Heart left ventricle (tissue), 16 donors: ENCODE measurements at regions of chr10 and their contacts with region 1.

Region 1: DNA sequence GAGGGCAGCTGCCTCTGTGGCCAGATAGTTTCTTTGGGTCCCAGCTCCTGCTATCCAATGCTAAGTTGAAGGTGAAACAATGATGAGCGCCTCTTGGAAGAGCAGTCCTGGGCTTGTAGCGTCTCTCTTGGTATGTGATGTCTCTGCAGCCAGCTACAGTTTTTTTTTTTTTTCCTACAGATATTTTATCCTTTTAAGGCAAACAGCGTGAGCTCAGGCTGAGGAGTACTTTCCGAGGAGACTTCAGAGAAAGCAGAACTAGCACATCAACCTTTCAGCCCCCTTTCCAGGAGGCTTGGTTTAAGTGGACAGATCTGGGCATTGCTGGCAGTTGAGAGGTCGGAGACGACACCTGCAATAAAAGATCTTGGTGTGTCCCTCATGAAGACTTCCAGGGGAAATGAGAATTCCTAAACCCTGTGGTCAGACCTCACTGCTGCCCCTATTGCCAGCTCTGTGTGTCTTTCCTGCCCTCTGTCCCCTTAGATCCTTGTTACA is 9.1 kb downstream of the PRKG1 start:
- DNase-seq: no peak
- ATAC-seq: peak in 2 of 4 donors; percentile 28 to 30
- H3K4me3 ChIP-seq: no peak overlapping the region
- H3K27ac ChIP-seq: peak overlapping the region in 6 of 12 donors; percentile 9 to 52 (median 31)
- H3K4me1 ChIP-seq: peaks cover 0 to 38% (median 6%) of the 10 kb centered on the region in 12 donors
- H3K27me3 ChIP-seq: no peaks in the 10 kb centered on the region
- CTCF ChIP-seq: peak in 1 of 12 donors; percentile 12
- POLR2A ChIP-seq: no peak

Region 2: GRCh38 chr10:50846753-50847152 is 236.7 kb before region 1 on chr10:
- intact Hi-C with region 1: no loop called
- DNase-seq: no peak
- ATAC-seq: no peak
- H3K4me3 ChIP-seq: no peak overlapping the region
- H3K27ac ChIP-seq: no peak overlapping the region
- H3K4me1 ChIP-seq: no peaks in the 10 kb centered on the region
- H3K27me3 ChIP-seq: no peaks in the 10 kb centered on the region
- CTCF ChIP-seq: no peak
- POLR2A ChIP-seq: no peak

Region 3: GRCh38 chr10:51206500-51206899 is 123.1 kb after region 1 on chr10:
- intact Hi-C with region 1: loop called in 1 of 10 experiments (anchors 10 kb)
- DNase-seq: no peak
- ATAC-seq: no peak
- H3K4me3 ChIP-seq: no peak overlapping the region
- H3K27ac ChIP-seq: no peak overlapping the region
- H3K4me1 ChIP-seq: peaks cover 0 to 37% (median 10%) of the 10 kb centered on the region in 12 donors
- H3K27me3 ChIP-seq: no peaks in the 10 kb centered on the region
- CTCF ChIP-seq: no peak
- POLR2A ChIP-seq: no peak

Region 4: GRCh38 chr10:51743146-51743545 is 659.7 kb after region 1 on chr10:
- intact Hi-C with region 1: no loop called
- DNase-seq: no peak
- ATAC-seq: no peak
- H3K4me3 ChIP-seq: peak overlapping the region in 1 of 12 donors; percentile 17
- H3K27ac ChIP-seq: no peak overlapping the region
- H3K4me1 ChIP-seq: peaks cover 0 to 11% (median 0%) of the 10 kb centered on the region in 12 donors
- H3K27me3 ChIP-seq: no peaks in the 10 kb centered on the region
- CTCF ChIP-seq: no peak
- POLR2A ChIP-seq: no peak